Psoas muscle (tissue), 8 donors: ENCODE measurements at regions of chr12 and their contacts with region 1.

Region 1: GRCh38 chr12:120228291-120229070 is 27.6 kb upstream of the RPLP0 start:
- DNase-seq: peak; percentile 89 to 95
- ATAC-seq: peak; percentile 54 to 67 (median 62)
- H3K4me3 ChIP-seq: peak overlapping the region; percentile 52
- H3K27ac ChIP-seq: peak overlapping the region; percentile 99
- H3K4me1 ChIP-seq: peaks cover 83% of the 10 kb centered on the region
- H3K27me3 ChIP-seq: no peaks in the 10 kb centered on the region
- CTCF ChIP-seq: peak; percentile 93

Region 2: GRCh38 chr12:119444456-119445044 is 783.9 kb before region 1 on chr12:
- intact Hi-C with region 1: no loop called
- DNase-seq: peak; percentile 21 to 59
- ATAC-seq: peak; percentile 48 to 82 (median 61)
- H3K4me3 ChIP-seq: no peak overlapping the region
- H3K27ac ChIP-seq: no peak overlapping the region
- H3K4me1 ChIP-seq: no peaks in the 10 kb centered on the region
- H3K27me3 ChIP-seq: peaks cover 0 to 2% (median 0%) of the 10 kb centered on the region in 3 donors
- CTCF ChIP-seq: peak; percentile 92

Region 3: GRCh38 chr12:120292661-120293531 is 64.4 kb after region 1 on chr12 and contains the start of gene RNU4-1:
- intact Hi-C with region 1: loop called in 1 of 2 experiments (anchors 2 kb)
- DNase-seq: peak; percentile 51 to 63
- ATAC-seq: peak; percentile 46 to 72 (median 59)
- H3K4me3 ChIP-seq: peak within 1 kb of the TSS; percentile 67
- H3K27ac ChIP-seq: peak within 1 kb of the TSS; percentile 97
- H3K4me1 ChIP-seq: peaks cover 7% of the 10 kb centered on the region
- H3K27me3 ChIP-seq: no peaks in the 10 kb centered on the region
- CTCF ChIP-seq: no peak
- total RNA-seq, gene RNU4-1: 1,144 to 3,144 (median 2,601) TPM